IMR-90 (cell line): ENCODE measurements at regions of chrX and their contacts with region 1.

Region 1: DNA sequence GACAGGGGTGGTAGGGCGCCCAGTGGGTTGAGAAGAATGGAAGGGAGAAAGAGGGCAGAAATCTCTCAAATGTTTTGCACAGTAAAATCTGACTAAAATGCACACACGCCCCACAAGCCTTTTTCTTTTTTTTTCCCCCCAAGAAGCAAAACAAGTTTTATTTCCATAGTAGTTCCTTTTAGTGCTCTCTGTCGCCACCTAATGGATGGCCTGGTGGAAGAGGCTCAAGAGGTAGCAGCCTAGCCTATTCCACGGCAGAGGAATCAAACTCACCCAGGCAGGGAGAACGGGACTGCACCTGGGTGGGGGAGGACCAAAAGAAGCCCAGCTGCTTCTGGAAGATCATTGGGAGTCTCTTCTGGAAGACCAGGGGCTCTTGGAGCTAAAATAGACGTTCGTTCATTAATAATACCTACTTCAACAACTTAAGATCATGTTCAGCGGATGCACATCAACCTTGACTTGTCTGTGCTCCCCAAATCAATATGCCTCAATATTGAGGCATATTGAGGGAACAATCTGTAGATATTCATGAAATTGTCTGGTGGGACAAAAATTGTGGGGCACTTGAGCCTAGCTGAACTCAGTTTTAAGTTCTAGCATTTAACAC is 31.6 kb upstream of the IRAK1 start:
- DNase-seq: peak; percentile 59
- ATAC-seq: peak; percentile 70
- H3K4me3 ChIP-seq: no peak overlapping the region
- H3K27ac ChIP-seq: no peak overlapping the region
- H3K4me1 ChIP-seq: peaks cover 10% of the 10 kb centered on the region
- H3K27me3 ChIP-seq: no peaks in the 10 kb centered on the region
- CTCF ChIP-seq: peak; percentile 70
- POLR2A ChIP-seq: no peak
- RAD21 ChIP-seq: peak; percentile 60

Region 2: DNA sequence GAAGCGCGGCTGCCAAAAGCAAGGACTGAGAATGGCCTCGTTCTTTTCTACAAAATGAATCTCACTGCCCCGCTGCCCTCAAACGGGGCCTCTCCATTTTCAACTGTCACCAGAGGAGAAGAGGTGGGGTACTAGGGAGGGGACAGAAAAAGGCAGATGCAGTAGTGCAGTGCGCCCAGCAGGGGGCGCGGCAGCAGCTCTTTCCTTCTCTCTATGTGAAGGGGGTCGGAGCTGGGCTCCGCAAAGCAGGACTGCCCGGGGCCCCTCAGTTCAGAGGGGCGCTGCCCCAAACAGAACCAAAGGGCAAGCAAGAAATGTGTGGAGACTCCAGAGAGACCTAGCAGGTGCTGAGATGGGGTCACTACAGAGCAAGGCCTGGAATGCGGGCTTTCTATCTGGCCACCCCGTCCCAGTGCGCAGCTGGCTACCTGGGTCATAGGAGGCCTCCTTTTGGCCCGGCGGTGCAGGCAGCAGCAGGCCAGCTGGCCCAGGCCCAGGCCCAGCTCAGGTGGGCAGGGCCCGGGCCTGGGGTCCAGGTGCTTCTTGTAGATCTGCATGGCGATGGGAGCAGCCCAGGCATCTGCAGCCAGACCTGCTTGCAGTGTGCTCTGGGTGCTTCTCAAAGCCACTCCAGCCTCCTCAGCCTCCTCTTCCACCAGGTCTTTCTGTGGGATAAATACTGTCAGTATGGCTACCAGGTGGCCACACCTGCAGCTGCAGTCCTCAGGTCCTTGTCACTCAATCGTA is 37.5 kb before region 1 on chrX:
- CTCF ChIA-PET with region 1: no interaction called
- POLR2A ChIA-PET with region 1: no interaction called
- dilution Hi-C with region 1: no loop called
- in situ Hi-C with region 1: no loop called
- intact Hi-C with region 1: loop called (anchors 1 kb)
- DNase-seq: peak; percentile 10
- ATAC-seq: peak; percentile 85
- H3K4me3 ChIP-seq: no peak overlapping the region
- H3K27ac ChIP-seq: no peak overlapping the region
- H3K4me1 ChIP-seq: peaks cover 3% of the 10 kb centered on the region; the same call in 1 of the 2 replicates
- H3K27me3 ChIP-seq: no peaks in the 10 kb centered on the region
- CTCF ChIP-seq: peak; percentile 61
- POLR2A ChIP-seq: no peak
- RAD21 ChIP-seq: peak; percentile 56